Activated CD4-positive, alpha-beta T cell treated with anti-CD3 and anti-CD28 coated beads for 36 hours (primary cell): ENCODE measurements at regions of chr1 and their contacts with region 1.

Region 1: GRCh38 chr1:26161415-26162219 is 2.7 kb downstream of the FAM110D start:
- DNase-seq: peak; percentile 67
- ATAC-seq: peak; percentile 47
- H3K4me3 Mint-ChIP-seq: peak overlapping the region; percentile 39
- H3K27ac Mint-ChIP-seq: no peak overlapping the region
- H3K4me1 Mint-ChIP-seq: peaks cover 10% of the 10 kb centered on the region
- H3K27me3 Mint-ChIP-seq: peaks cover 15% of the 10 kb centered on the region

Region 2: GRCh38 chr1:26035959-26036755 is 125.5 kb before region 1 on chr1:
- CTCF ChIA-PET with region 1: interaction called, 5 read pairs
- POLR2A ChIA-PET with region 1: no interaction called
- intact Hi-C with region 1: loop called (anchors 1 to 5 kb)
- DNase-seq: peak; percentile 86
- ATAC-seq: peak; percentile 76
- H3K4me3 Mint-ChIP-seq: peak overlapping the region; percentile 80
- H3K27ac Mint-ChIP-seq: peak overlapping the region; percentile 78
- H3K4me1 Mint-ChIP-seq: peaks cover 13% of the 10 kb centered on the region
- H3K27me3 Mint-ChIP-seq: peaks cover 6% of the 10 kb centered on the region

Region 3: DNA sequence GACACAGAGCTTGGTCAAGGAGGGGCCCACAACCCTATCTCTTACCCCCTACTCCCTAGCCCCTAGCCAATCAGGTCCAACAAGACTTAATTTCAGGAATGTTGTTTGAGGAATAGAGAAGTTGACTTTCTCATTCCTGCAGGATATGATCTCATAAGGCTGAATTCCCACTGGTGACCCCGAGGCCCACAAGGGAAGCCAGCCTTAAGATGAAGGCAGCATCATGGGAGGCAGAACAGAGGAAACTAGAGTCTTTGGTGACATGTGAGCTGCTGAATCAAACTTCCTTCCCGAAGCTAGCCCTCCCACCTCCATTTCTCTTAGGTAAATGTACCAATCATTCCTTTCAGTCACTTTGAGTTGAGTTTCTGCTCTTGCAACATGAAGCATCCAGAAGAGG is 59.1 kb before region 1 on chr1:
- CTCF ChIA-PET with region 1: interaction called, 4 read pairs
- POLR2A ChIA-PET with region 1: no interaction called
- intact Hi-C with region 1: loop called (anchors 1 kb)
- DNase-seq: no peak
- ATAC-seq: no peak
- H3K4me3 Mint-ChIP-seq: no peak overlapping the region
- H3K27ac Mint-ChIP-seq: no peak overlapping the region
- H3K4me1 Mint-ChIP-seq: peaks cover 7% of the 10 kb centered on the region
- H3K27me3 Mint-ChIP-seq: no peaks in the 10 kb centered on the region

Region 4: GRCh38 chr1:26351591-26352337 is 190.1 kb after region 1 on chr1:
- CTCF ChIA-PET with region 1: no interaction called
- POLR2A ChIA-PET with region 1: no interaction called
- intact Hi-C with region 1: no loop called
- DNase-seq: no peak
- ATAC-seq: no peak
- H3K4me3 Mint-ChIP-seq: no peak overlapping the region
- H3K27ac Mint-ChIP-seq: no peak overlapping the region
- H3K4me1 Mint-ChIP-seq: no peaks in the 10 kb centered on the region
- H3K27me3 Mint-ChIP-seq: no peaks in the 10 kb centered on the region